ENCODE measurements at regions of chr15 and their contacts with region 1.

Region 1: GRCh38 chr15:72312605-72313447 is 7.1 kb downstream of the CELF6 start:
- DNase-seq: peak; percentile 38 to 70
- H3K4me3 ChIP-seq: no peak overlapping the region
- H3K27ac ChIP-seq: no peak overlapping the region
- H3K4me1 ChIP-seq: no peaks in the 10 kb centered on the region
- H3K27me3 ChIP-seq: peaks cover 0 to 9% (median 4%) of the 10 kb centered on the region in 4 experiments; a peak in 4 of 7 replicates
- CTCF ChIP-seq: peak; percentile 91 to 92 (median 91)
- EP300 ChIP-seq: no peak
- POLR2A ChIP-seq: no peak
- RAD21 ChIP-seq: peak; percentile 83 to 89

Region 2: DNA sequence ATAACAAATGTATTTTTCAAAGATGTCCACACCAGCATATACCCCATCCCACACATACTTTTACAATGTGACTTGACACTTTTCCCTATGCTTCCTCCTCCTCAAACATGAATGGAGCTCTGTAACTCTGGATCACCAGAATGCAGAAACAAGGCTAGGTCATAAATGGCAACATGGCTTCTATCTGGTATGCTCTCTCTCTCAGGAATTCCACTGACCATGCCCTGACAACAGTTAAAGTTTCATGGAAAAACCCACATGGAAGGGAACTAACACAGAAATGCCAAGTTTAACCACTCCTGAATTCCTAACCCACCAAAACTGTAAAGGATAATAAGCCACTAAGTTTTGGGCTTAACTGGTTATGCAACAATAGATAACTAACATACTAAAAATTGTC is 214.8 kb before region 1 on chr15:
- CTCF ChIA-PET with region 1: no interaction called
- POLR2A ChIA-PET with region 1: no interaction called
- DNase-seq: no peak
- H3K4me3 ChIP-seq: no peak overlapping the region
- H3K27ac ChIP-seq: no peak overlapping the region
- H3K4me1 ChIP-seq: no peaks in the 10 kb centered on the region; a peak in 1 of 7 replicates
- H3K27me3 ChIP-seq: peaks cover 0 to 1% (median 0%) of the 10 kb centered on the region in 4 experiments; a peak in 1 of 7 replicates
- CTCF ChIP-seq: no peak
- EP300 ChIP-seq: no peak
- POLR2A ChIP-seq: no peak
- RAD21 ChIP-seq: no peak

Region 3: DNA sequence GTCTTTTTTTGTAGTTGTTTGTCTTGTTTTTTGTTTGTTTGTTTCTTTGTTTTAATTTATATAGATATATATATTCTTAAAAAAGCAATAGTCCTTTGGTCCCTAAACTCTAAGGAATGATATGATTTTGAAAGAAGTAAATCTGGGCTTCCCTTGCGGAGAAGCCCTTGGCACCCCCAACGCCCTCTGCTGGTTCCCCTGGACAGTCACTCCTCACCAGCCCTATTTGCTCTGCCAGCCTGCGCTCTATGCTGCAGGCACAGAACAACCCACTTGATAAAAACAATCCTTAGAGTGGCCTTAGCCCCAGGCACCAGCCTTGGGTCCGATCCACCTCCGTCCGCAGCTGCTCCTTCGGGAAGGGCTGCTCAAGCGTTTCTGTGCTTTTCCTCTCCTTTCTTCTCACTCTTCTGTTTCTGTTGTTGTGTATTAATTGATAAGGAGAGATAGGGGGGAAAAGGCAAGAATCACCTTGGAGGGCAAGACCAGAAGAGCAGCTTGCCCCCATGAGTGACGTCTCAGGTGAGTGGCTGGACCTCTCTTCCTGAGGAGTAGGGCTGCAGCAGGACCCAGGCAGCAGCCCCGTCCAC is 26.8 kb before region 1 on chr15:
- CTCF ChIA-PET with region 1: interaction called, 13 read pairs
- POLR2A ChIA-PET with region 1: no interaction called
- DNase-seq: peak; percentile 27 to 72
- H3K4me3 ChIP-seq: no peak overlapping the region
- H3K27ac ChIP-seq: no peak overlapping the region
- H3K4me1 ChIP-seq: no peaks in the 10 kb centered on the region
- H3K27me3 ChIP-seq: 0 out of 7 replicates have a peak, but pooled peaks cover 0 to 3% (median 0%) of the 10 kb centered on the region in 4 experiments
- CTCF ChIP-seq: peak; percentile 75 to 90 (median 82)
- EP300 ChIP-seq: no peak
- POLR2A ChIP-seq: no peak
- RAD21 ChIP-seq: peak; percentile 36 to 43; a peak in 3 of 4 replicates

Region 4: GRCh38 chr15:72331021-72331420 is 18.2 kb after region 1 on chr15:
- CTCF ChIA-PET with region 1: interaction called, 17 read pairs
- POLR2A ChIA-PET with region 1: no interaction called
- DNase-seq: no peak
- H3K4me3 ChIP-seq: no peak overlapping the region
- H3K27ac ChIP-seq: no peak overlapping the region
- H3K4me1 ChIP-seq: no peaks in the 10 kb centered on the region
- H3K27me3 ChIP-seq: no peaks in the 10 kb centered on the region
- CTCF ChIP-seq: no peak
- EP300 ChIP-seq: no peak
- POLR2A ChIP-seq: no peak
- RAD21 ChIP-seq: no peak

Region 5: GRCh38 chr15:72339777-72340177 is 27.0 kb after region 1 on chr15:
- CTCF ChIA-PET with region 1: interaction called, 30 read pairs
- POLR2A ChIA-PET with region 1: no interaction called
- DNase-seq: no peak
- H3K4me3 ChIP-seq: no peak overlapping the region
- H3K27ac ChIP-seq: no peak overlapping the region
- H3K4me1 ChIP-seq: peaks cover 0 to 2% (median 2%) of the 10 kb centered on the region in 4 experiments; a peak in 4 of 7 replicates
- H3K27me3 ChIP-seq: no peaks in the 10 kb centered on the region
- CTCF ChIP-seq: no peak
- EP300 ChIP-seq: no peak
- POLR2A ChIP-seq: no peak
- RAD21 ChIP-seq: no peak

Region 6: GRCh38 chr15:72532991-72533601 is 220.3 kb after region 1 on chr15:
- CTCF ChIA-PET with region 1: interaction called, 11 read pairs
- POLR2A ChIA-PET with region 1: no interaction called
- DNase-seq: no peak
- H3K4me3 ChIP-seq: no peak overlapping the region
- H3K27ac ChIP-seq: no peak overlapping the region
- H3K4me1 ChIP-seq: no peaks in the 10 kb centered on the region
- H3K27me3 ChIP-seq: no peaks in the 10 kb centered on the region
- CTCF ChIP-seq: peak; percentile 47 to 59 (median 55)
- EP300 ChIP-seq: no peak
- POLR2A ChIP-seq: no peak
- RAD21 ChIP-seq: peak; percentile 56 to 61

Measured in H1 (cell line).